Left cardiac atrium (tissue), 4 donors: ENCODE measurements at regions of chr15 and their contacts with region 1.

Region 1: GRCh38 chr15:61051569-61052031 is 177.5 kb downstream of the RORA start:
- DNase-seq: peak; percentile 41
- ATAC-seq: peak; percentile 88 to 95

Region 2: DNA sequence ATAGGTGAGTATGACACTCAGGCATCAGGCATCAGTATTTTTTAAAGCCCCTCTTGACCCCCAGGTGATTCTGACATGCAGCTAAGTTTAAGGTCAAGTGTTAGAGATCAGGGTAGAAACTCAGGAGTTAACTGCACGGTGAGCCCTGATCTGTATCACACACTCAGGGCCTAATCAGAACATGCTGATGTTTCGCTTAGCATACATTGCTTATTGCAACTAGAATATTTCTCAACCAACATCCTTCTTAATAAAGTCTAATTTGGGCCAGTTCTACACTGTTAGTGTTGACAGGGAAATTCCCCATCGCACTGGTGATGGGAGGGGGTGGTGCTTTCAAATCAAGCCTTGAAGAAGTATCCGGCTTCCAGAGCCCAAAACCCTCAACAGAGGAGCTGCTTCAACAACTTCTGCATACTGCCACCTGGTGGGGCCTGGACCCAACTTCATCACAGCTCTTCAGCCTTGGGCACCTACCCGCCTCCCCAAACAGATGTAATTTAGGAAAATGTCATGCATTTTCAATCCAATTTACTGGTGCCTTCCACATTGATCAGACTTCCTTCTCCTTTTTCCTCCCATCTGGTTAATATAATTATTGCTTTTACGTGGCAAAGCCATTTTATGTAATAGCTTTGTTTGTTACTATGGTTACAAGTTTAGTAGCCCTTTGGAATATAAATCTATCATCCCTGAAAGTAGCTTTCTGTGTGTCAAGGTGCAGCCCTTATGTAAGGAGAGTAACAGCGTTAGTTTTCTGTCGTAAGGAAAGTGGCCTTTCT is 134.7 kb before region 1 on chr15:
- intact Hi-C with region 1: loop called in 1 of 2 experiments (anchors 10 kb)
- DNase-seq: peak; percentile 91
- ATAC-seq: peak; percentile 89 to 93